Activated T-helper 2 cell treated with anti-CD3 and anti-CD28 coated beads, Interferon-gamma antibody, Interleukin-2, Interleukin-4, amounts not matched to agents 10 μg/mL and 5 μg/mL and 100 μg/mL, durations not matched to agents 14 hours and 24 hours and 36 hours (primary cell): ENCODE measurements at regions of chr12 and their contacts with region 1.

Region 1: DNA sequence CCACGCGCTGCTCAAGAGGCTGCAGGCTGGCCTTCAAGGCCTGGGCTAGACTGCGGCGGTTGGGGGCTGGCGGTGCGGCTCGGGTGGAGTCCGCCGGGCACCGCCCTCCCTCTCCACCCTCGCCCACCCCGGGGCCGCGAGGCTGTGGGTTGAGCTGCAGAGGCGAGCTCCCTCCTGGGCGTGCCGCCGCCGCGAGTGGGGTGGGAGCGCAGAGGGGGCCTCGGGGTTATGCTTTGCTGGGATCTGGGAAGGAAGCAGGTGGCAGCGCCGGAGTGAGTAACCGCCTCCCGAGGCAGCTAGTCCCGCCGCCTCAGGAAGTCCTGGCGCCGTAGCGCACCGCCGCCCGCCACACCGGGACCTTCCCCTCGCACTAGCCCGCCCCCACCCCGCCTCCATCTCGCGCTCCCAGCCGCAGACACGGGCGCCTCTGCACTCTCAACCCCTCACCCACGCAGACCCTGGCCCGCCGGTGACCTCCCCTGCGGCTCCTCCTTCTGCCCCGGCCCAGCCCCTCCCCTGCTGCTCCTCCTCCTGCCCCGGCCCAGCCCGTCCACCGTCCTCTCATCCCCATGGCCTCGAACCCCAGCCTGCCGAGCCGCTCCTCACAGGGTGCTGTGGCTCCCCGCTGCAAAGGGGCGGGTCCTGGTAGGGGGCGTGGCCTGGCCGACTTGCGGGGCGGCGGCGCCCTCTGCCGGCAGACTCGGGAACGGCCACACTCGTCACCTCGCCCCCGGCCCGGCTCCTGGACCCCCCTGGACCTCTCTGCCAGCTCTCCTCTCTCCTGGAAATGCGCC is 16.6 kb downstream of the TAMALIN start:
- DNase-seq: peak; percentile 88
- H3K4me3 Mint-ChIP-seq: peak overlapping the region; percentile 87
- H3K27ac Mint-ChIP-seq: peak overlapping the region; percentile 98
- H3K4me1 Mint-ChIP-seq: peaks cover 39% of the 10 kb centered on the region
- H3K27me3 Mint-ChIP-seq: peaks cover 3% of the 10 kb centered on the region

Region 2: GRCh38 chr12:51970904-51971646 is 52.3 kb before region 1 on chr12:
- intact Hi-C with region 1: loop called (anchors 5 kb)
- DNase-seq: peak; percentile 44
- H3K4me3 Mint-ChIP-seq: peak overlapping the region; percentile 55
- H3K27ac Mint-ChIP-seq: peak overlapping the region; percentile 38
- H3K4me1 Mint-ChIP-seq: peaks cover 57% of the 10 kb centered on the region
- H3K27me3 Mint-ChIP-seq: peaks cover 43% of the 10 kb centered on the region

Region 3: DNA sequence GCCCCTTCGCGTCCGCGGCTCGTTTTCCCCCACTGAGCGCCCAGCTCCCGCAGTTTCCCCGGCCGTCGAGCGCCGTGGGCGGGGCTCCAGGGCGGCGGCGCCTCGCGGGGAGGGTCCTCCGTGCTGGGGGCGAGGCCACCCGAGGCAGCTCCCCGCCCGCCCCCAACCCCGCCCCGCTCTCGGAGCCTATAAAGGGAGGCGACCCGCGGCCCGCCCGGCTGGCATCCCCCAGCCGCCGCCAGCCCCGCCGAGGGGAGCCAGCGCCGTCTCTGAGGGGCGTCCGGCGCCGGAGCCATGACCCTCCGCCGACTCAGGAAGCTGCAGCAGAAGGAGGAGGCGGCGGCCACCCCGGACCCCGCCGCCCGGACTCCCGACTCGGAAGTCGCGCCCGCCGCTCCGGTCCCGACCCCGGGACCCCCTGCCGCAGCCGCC is 16.6 kb before region 1 on chr12 and contains the start of gene TAMALIN:
- intact Hi-C with region 1: loop called (anchors 1 kb)
- DNase-seq: peak; percentile 53
- H3K4me3 Mint-ChIP-seq: peak within 1 kb of the TSS; percentile 72
- H3K27ac Mint-ChIP-seq: no peak within 1 kb of the TSS
- H3K4me1 Mint-ChIP-seq: peaks cover 10% of the 10 kb centered on the region
- H3K27me3 Mint-ChIP-seq: peaks cover 47% of the 10 kb centered on the region
- total RNA-seq, gene TAMALIN: 6.0 and 6.1 TPM in 2 replicates

Region 4: DNA sequence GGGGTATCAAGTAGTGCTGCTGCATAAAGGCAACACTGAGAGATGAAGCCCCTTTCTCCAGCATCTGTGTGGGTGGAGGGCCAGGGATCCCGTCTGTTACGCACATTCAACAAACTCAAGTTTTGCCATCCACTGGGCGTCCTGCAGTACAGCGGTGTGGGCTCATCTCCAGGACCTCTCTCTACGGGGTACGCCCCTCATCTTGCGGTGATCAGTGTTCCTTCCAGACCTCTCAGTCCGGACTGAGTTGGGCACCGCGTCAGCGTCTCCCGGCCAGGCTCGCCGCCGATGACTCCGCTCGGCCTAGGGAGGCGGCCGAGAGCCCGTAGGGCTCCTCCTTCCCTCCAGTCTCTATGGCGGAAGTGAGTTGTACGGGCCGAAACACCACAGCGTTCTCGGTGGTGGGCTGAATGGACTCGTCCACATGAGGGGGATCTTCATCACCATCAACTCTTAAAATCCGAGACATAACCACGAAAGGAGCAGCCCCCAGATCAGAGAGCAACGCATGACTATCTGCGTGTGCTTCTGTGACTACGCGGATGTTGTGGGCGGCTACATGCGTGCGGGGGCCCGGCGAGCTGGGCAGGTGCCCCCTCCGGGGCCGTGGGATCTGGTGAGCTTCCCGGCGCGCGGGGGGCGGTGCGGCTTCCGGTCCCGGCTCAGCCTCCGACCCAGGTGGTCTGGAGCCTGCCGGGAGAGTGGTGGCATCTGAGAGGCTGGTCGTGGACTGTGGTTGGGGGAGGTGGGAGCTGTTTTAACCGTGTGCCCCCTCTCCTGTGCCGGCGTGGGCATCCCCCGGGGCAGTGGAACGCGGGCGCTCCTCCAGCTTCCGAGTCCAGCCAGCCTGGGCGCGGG is 46.2 kb after region 1 on chr12 and contains the start of gene ATG101:
- intact Hi-C with region 1: loop called (anchors 1 kb)
- DNase-seq: peak; percentile 84
- H3K4me3 Mint-ChIP-seq: peak within 1 kb of the TSS; percentile 95
- H3K27ac Mint-ChIP-seq: peak within 1 kb of the TSS; percentile 98
- H3K4me1 Mint-ChIP-seq: peaks cover 43% of the 10 kb centered on the region
- H3K27me3 Mint-ChIP-seq: peaks cover 1% of the 10 kb centered on the region
- total RNA-seq, gene ATG101: 44.6 and 45.9 TPM in 2 replicates

Region 5: DNA sequence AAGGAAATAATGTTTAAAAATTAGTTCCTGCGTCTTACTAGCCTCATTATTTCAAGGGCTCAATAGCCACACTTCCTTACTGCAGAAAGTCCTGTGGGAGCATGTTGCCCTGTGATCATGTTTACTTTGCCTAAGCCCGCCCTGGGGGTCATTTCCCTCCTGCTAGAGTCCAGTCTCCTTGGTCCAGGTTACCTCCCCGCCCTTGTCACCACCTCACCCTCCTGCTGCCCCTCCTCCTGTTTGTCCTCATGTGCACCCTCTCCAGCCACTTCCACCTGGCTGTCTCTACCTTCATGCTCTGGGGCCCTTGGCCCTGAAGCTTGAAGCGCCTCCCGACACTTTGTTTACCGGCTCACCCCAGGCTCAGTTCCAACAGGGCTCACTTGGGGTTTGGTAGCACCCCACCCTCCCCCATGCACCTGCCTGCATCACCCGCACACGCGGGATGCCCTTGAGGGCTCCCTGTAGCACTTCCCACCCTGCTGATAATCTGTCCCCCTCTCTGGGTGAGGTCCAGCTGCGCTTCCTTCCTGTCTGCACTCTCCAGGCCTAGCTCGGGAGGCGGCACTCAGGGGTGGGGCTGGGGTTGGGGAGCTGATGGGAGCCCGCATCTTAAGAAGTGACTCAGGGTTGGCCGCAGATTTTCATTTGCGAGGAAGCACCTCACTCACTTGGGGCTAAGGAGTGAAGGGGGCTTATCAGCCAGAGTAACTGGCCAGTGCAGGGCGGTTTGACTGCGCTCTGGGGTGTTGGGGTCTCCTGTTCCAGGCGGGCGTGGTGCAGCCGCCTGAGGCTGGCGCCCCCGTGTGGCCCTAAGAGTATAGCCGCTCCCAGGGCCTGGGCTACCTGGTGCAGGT is 96.2 kb after region 1 on chr12:
- intact Hi-C with region 1: loop called (anchors 1 kb)
- DNase-seq: no peak
- H3K4me3 Mint-ChIP-seq: no peak overlapping the region
- H3K27ac Mint-ChIP-seq: no peak overlapping the region
- H3K4me1 Mint-ChIP-seq: peaks cover 25% of the 10 kb centered on the region
- H3K27me3 Mint-ChIP-seq: peaks cover 5% of the 10 kb centered on the region